CD4-positive, alpha-beta T cell (primary cell): ENCODE measurements at regions of chr7 and their contacts with region 1.

Region 1: GRCh38 chr7:71752171-71752935 is 620.4 kb downstream of the GALNT17 start:
- DNase-seq: peak in 5 of 14 experiments; percentile 6 to 32 (median 18)
- ATAC-seq: no peak
- H3K4me3 ChIP-seq: no peak overlapping the region
- H3K4me3 Mint-ChIP-seq: no peak overlapping the region
- H3K27ac ChIP-seq: no peak overlapping the region
- H3K27ac Mint-ChIP-seq: no peak overlapping the region
- H3K4me1 ChIP-seq: peaks cover 2% of the 10 kb centered on the region
- H3K4me1 Mint-ChIP-seq: no peaks in the 10 kb centered on the region
- H3K27me3 ChIP-seq: peaks cover 9 to 10% of the 10 kb centered on the region in 2 experiments
- H3K27me3 Mint-ChIP-seq: peaks cover 35% of the 10 kb centered on the region
- CTCF ChIP-seq: no peak

Region 2: DNA sequence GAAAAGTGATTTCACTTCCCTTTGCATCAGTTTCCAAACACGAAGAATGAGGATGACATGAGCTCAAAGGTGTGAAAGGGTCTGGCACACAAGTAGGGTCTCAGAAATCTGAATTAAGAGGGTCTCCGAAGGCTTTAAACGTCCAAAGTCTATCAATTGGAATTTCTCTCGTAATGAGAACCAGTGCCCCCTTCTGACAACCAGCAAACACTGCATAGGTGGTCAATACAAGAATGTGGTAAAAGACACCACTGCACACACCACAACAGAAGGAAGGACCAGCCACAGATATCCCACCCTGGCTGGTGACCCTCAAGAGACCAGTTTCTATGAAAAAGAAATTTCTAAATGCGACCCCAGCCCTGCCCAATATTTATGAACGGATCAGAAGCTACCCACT is 581.7 kb after region 1 on chr7:
- CTCF ChIA-PET with region 1: no interaction called
- POLR2A ChIA-PET with region 1: no interaction called
- intact Hi-C with region 1: loop called in 1 of 2 experiments (anchors 10 kb)
- DNase-seq: no peak
- ATAC-seq: no peak
- H3K4me3 ChIP-seq: no peak overlapping the region
- H3K4me3 Mint-ChIP-seq: no peak overlapping the region
- H3K27ac ChIP-seq: no peak overlapping the region
- H3K27ac Mint-ChIP-seq: no peak overlapping the region
- H3K4me1 ChIP-seq: no peaks in the 10 kb centered on the region
- H3K4me1 Mint-ChIP-seq: no peaks in the 10 kb centered on the region
- H3K27me3 ChIP-seq: peaks cover 8 to 25% of the 10 kb centered on the region in 2 experiments
- H3K27me3 Mint-ChIP-seq: peaks cover 33% of the 10 kb centered on the region
- CTCF ChIP-seq: no peak

Region 3: GRCh38 chr7:72493850-72494661 is 741.7 kb after region 1 on chr7:
- CTCF ChIA-PET with region 1: no interaction called
- POLR2A ChIA-PET with region 1: no interaction called
- intact Hi-C with region 1: loop called (anchors 10 kb)
- DNase-seq: peak; percentile 4 to 58 (median 24)
- ATAC-seq: no peak
- H3K4me3 ChIP-seq: no peak overlapping the region
- H3K4me3 Mint-ChIP-seq: no peak overlapping the region
- H3K27ac ChIP-seq: no peak overlapping the region
- H3K27ac Mint-ChIP-seq: no peak overlapping the region
- H3K4me1 ChIP-seq: peaks cover 2% of the 10 kb centered on the region
- H3K4me1 Mint-ChIP-seq: no peaks in the 10 kb centered on the region
- H3K27me3 ChIP-seq: no peaks in the 10 kb centered on the region
- H3K27me3 Mint-ChIP-seq: no peaks in the 10 kb centered on the region
- CTCF ChIP-seq: peak; percentile 70